PC-9 (cell line): ENCODE measurements at regions of chr22 and their contacts with region 1.

Region 1: GRCh38 chr22:42919199-42919598 is 62.1 kb upstream of the ARFGAP3 start:
- DNase-seq: peak; percentile 38 to 75
- H3K4me3 ChIP-seq: no peak overlapping the region
- H3K27ac ChIP-seq: peak overlapping the region; percentile 37
- H3K4me1 ChIP-seq: peaks cover 46% of the 10 kb centered on the region
- H3K27me3 ChIP-seq: no peaks in the 10 kb centered on the region
- CTCF ChIP-seq: no peak

Region 2: GRCh38 chr22:43060183-43060582 is 141.0 kb after region 1 on chr22:
- CTCF ChIA-PET with region 1: interaction called, 21 read pairs
- POLR2A ChIA-PET with region 1: no interaction called
- intact Hi-C with region 1: no loop called
- DNase-seq: peak in 1 of 2 experiments; percentile 56
- H3K4me3 ChIP-seq: no peak overlapping the region
- H3K27ac ChIP-seq: no peak overlapping the region
- H3K4me1 ChIP-seq: no peaks in the 10 kb centered on the region
- H3K27me3 ChIP-seq: no peaks in the 10 kb centered on the region
- CTCF ChIP-seq: peak; percentile 92

Region 3: GRCh38 chr22:43109921-43110443 is 190.8 kb after region 1 on chr22:
- CTCF ChIA-PET with region 1: no interaction called
- POLR2A ChIA-PET with region 1: no interaction called
- intact Hi-C with region 1: no loop called
- DNase-seq: no peak
- H3K4me3 ChIP-seq: peak overlapping the region; percentile 89
- H3K27ac ChIP-seq: no peak overlapping the region
- H3K4me1 ChIP-seq: peaks cover 21% of the 10 kb centered on the region
- H3K27me3 ChIP-seq: peaks cover 4% of the 10 kb centered on the region; the same call in 1 of the 2 replicates
- CTCF ChIP-seq: no peak